ENCODE measurements at regions of chr4 and their contacts with region 1.

Region 1: DNA sequence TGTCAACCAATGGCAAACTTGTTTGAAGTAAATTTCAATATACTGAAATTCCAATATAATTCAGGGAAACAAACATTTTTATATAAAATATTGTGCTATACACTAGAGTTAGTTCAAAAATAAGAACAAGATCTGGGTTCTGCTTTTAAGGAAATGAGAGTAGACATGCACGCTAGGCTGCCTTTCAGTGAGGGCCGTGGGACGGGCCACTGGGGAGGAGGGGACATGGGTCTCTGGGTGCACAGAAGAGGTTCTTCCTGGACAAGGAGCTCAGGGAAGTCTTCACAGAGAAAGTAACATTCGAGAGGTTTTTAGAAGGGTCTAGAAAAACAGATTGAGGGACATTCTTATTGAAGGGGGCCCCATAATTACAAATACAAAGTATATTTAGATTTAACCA is 64.4 kb downstream of the SHROOM3 start:
- DNase-seq: peak; percentile 47
- ATAC-seq: peak; percentile 99
- H3K4me3 Mint-ChIP-seq: peak overlapping the region; percentile 50
- H3K27ac Mint-ChIP-seq: peak overlapping the region; percentile 82
- H3K4me1 Mint-ChIP-seq: peaks cover 37% of the 10 kb centered on the region
- H3K27me3 Mint-ChIP-seq: no peaks in the 10 kb centered on the region
- CTCF ChIP-seq: no peak

Region 2: GRCh38 chr4:75584067-75584466 is 915.4 kb before region 1 on chr4:
- CTCF ChIA-PET with region 1: no interaction called
- POLR2A ChIA-PET with region 1: no interaction called
- intact Hi-C with region 1: loop called (anchors 10 kb)
- DNase-seq: no peak
- ATAC-seq: no peak
- H3K4me3 Mint-ChIP-seq: no peak overlapping the region
- H3K27ac Mint-ChIP-seq: no peak overlapping the region
- H3K4me1 Mint-ChIP-seq: no peaks in the 10 kb centered on the region
- H3K27me3 Mint-ChIP-seq: peaks cover 22% of the 10 kb centered on the region
- CTCF ChIP-seq: no peak

Region 3: GRCh38 chr4:76198411-76199237 is 300.8 kb before region 1 on chr4:
- CTCF ChIA-PET with region 1: no interaction called
- POLR2A ChIA-PET with region 1: no interaction called
- intact Hi-C with region 1: loop called (anchors 5 kb)
- DNase-seq: no peak
- ATAC-seq: no peak
- H3K4me3 Mint-ChIP-seq: peak overlapping the region; percentile 1
- H3K27ac Mint-ChIP-seq: peak overlapping the region; percentile 51
- H3K4me1 Mint-ChIP-seq: peaks cover 58% of the 10 kb centered on the region
- H3K27me3 Mint-ChIP-seq: no peaks in the 10 kb centered on the region
- CTCF ChIP-seq: no peak